ENCODE measurements at regions of chr10 and their contacts with region 1.

Region 1: GRCh38 chr10:48215488-48216204 is 58.9 kb downstream of the FRMPD2 start:
- DNase-seq: peak; percentile 72
- ATAC-seq: peak; percentile 33; the same call in 1 of the 2 replicates
- H3K4me3 ChIP-seq: no peak overlapping the region
- H3K27ac ChIP-seq: no peak overlapping the region
- H3K4me1 ChIP-seq: no peaks in the 10 kb centered on the region
- H3K27me3 ChIP-seq: no peaks in the 10 kb centered on the region; the same call in 1 of the 2 replicates
- CTCF ChIP-seq: peak; percentile 77

Region 2: GRCh38 chr10:48289501-48290238 is 74.0 kb after region 1 on chr10:
- CTCF ChIA-PET with region 1: no interaction called
- POLR2A ChIA-PET with region 1: no interaction called
- intact Hi-C with region 1: loop called (anchors 2 kb)
- DNase-seq: peak; percentile 57
- ATAC-seq: peak; percentile 71
- H3K4me3 ChIP-seq: no peak overlapping the region
- H3K27ac ChIP-seq: no peak overlapping the region
- H3K4me1 ChIP-seq: no peaks in the 10 kb centered on the region
- H3K27me3 ChIP-seq: no peaks in the 10 kb centered on the region; the same call in 1 of the 2 replicates
- CTCF ChIP-seq: peak; percentile 72

Measured in PC-3 (cell line).